Head of caudate nucleus (tissue), 42 donors: ENCODE measurements at regions of chr17 and their contacts with region 1.

Region 1: DNA sequence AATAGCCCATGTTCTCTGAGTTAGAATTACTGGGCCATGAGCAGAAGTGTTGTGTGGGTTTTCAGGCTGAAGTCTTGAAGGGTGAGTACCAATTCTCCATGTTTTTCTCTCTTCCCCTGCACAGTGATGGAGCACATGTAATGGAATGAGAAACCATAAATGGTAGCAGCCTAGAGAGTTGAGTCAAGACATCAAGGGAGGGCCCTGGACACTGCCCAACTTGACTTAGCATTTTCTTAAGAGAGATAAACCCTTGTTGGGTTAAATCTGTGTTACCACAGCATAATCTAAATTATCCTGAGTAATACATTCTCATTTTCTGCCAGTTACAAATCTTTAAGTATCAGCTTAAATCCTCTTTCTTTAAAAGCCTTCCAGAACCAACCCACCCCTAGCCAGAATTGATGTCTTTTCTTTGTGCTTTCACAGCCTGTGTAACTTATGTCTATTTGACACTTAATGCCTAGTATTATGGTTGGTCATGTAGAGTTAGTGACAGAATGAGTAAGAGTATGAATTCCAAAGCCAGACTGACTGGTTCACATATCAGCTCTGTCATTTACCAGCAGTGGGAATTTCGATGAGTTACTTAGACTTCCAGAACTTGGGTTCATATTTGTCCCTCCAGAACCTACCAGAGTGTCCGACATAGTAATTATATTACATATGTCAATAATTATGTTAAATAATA is 27.0 kb upstream of the RGS9 start:
- DNase-seq: no peak

Region 2: GRCh38 chr17:63516910-63517824 is 1593.0 kb before region 1 on chr17:
- intact Hi-C with region 1: no loop called
- DNase-seq: no peak

Region 3: GRCh38 chr17:65198653-65199382 is 88.7 kb after region 1 on chr17:
- intact Hi-C with region 1: loop called (anchors 10 kb)
- DNase-seq: peak in 9 of 42 donors; percentile 19 to 61 (median 29)